T-cell (primary cell): ENCODE measurements at regions of chr3 and their contacts with region 1.

Region 1: GRCh38 chr3:129794311-129795185 is 99.0 kb downstream of the TMCC1 start:
- DNase-seq: peak in 11 of 35 experiments; percentile 0 to 20 (median 4)
- ATAC-seq: peak; percentile 31 to 70 (median 51)
- H3K4me3 ChIP-seq: peak overlapping the region in 1 of 2 donors; percentile 47
- H3K4me3 Mint-ChIP-seq: peak overlapping the region in 2 of 3 donors; percentile 44 to 57
- H3K27ac ChIP-seq: no peak overlapping the region
- H3K27ac Mint-ChIP-seq: no peak overlapping the region
- H3K4me1 ChIP-seq: peaks cover 10 to 12% of the 10 kb centered on the region in 2 experiments
- H3K4me1 Mint-ChIP-seq: peaks cover 17 to 26% (median 20%) of the 10 kb centered on the region in 3 donors
- H3K27me3 ChIP-seq: no peaks in the 10 kb centered on the region
- H3K27me3 Mint-ChIP-seq: no peaks in the 10 kb centered on the region

Region 2: DNA sequence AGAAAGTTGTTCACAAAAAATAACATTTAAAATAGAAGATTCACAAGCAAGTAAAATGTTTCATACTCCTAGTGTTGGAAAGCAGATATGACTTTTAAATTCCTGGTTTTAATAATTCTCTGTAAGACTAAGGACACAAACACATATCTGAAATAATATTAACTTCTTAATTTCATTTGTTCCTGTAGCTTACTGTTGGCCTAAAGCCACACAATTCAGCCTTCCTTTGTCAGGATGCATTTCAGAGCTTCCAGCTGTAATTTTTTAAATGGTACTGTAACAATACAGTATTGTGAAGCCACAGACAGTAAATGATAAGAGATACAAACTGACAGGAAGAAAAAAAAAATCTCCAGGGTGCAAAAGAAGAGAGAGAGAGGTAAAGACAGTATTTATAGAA is 14.7 kb after region 1 on chr3:
- CTCF ChIA-PET with region 1: interaction called, 3 read pairs
- POLR2A ChIA-PET with region 1: interaction called in 1 of 2 experiments, 11 read pairs
- DNase-seq: no peak
- ATAC-seq: no peak
- H3K4me3 ChIP-seq: no peak overlapping the region
- H3K4me3 Mint-ChIP-seq: no peak overlapping the region
- H3K27ac ChIP-seq: no peak overlapping the region
- H3K27ac Mint-ChIP-seq: no peak overlapping the region
- H3K4me1 ChIP-seq: no peaks in the 10 kb centered on the region
- H3K4me1 Mint-ChIP-seq: peaks cover 21 to 36% (median 33%) of the 10 kb centered on the region in 3 donors
- H3K27me3 ChIP-seq: no peaks in the 10 kb centered on the region
- H3K27me3 Mint-ChIP-seq: no peaks in the 10 kb centered on the region

Region 3: GRCh38 chr3:129878372-129878771 is 83.8 kb after region 1 on chr3:
- CTCF ChIA-PET with region 1: no interaction called
- POLR2A ChIA-PET with region 1: no interaction called
- DNase-seq: no peak
- ATAC-seq: no peak
- H3K4me3 ChIP-seq: no peak overlapping the region
- H3K4me3 Mint-ChIP-seq: no peak overlapping the region
- H3K27ac ChIP-seq: no peak overlapping the region
- H3K27ac Mint-ChIP-seq: no peak overlapping the region
- H3K4me1 ChIP-seq: no peaks in the 10 kb centered on the region
- H3K4me1 Mint-ChIP-seq: peaks cover 20 to 29% (median 23%) of the 10 kb centered on the region in 3 donors
- H3K27me3 ChIP-seq: no peaks in the 10 kb centered on the region
- H3K27me3 Mint-ChIP-seq: no peaks in the 10 kb centered on the region